PC-9 (cell line): ENCODE measurements at regions of chr5 and their contacts with region 1.

Region 1: GRCh38 chr5:163459922-163460766 is at the starts of genes HMMR and NUDCD2:
- DNase-seq: peak; percentile 91 to 96
- H3K4me3 ChIP-seq: peak within 1 kb of the TSS; percentile 97
- H3K27ac ChIP-seq: peak within 1 kb of the TSS; percentile 95
- H3K4me1 ChIP-seq: peaks cover 36% of the 10 kb centered on the region
- H3K27me3 ChIP-seq: no peaks in the 10 kb centered on the region
- CTCF ChIP-seq: no peak; the same call in 1 of the 2 replicates
- total RNA-seq, gene HMMR: 83.9 and 94.5 TPM in 2 replicates
- total RNA-seq, gene NUDCD2: 68.6 and 71.6 TPM in 2 replicates

Region 2: DNA sequence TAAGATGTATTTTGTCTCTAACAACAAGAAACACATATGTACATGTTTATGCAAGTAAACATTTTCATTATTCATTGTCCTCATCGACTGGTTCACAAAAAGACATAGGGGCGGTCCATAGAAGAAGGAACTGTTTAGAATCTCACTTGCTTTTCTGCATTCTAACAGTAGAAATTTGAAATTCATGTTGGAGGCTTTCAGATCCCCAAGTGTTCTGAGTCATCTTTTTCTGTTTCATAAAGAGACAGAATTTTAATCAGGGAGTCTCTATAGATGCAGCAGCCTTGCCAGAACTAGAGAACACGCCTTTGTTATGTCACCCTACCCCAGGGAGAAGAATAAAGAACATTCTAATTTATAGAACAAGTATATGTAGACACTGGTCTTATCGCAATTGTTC is 1068.3 kb before region 1 on chr5:
- CTCF ChIA-PET with region 1: interaction called, 13 read pairs
- POLR2A ChIA-PET with region 1: no interaction called
- intact Hi-C with region 1: no loop called
- DNase-seq: no peak
- H3K4me3 ChIP-seq: no peak overlapping the region
- H3K27ac ChIP-seq: no peak overlapping the region
- H3K4me1 ChIP-seq: no peaks in the 10 kb centered on the region
- H3K27me3 ChIP-seq: no peaks in the 10 kb centered on the region
- CTCF ChIP-seq: no peak

Region 3: GRCh38 chr5:162929104-162929503 is 531.0 kb before region 1 on chr5:
- CTCF ChIA-PET with region 1: no interaction called
- POLR2A ChIA-PET with region 1: interaction called, 19 read pairs
- intact Hi-C with region 1: no loop called
- DNase-seq: no peak
- H3K4me3 ChIP-seq: no peak overlapping the region
- H3K27ac ChIP-seq: no peak overlapping the region
- H3K4me1 ChIP-seq: no peaks in the 10 kb centered on the region
- H3K27me3 ChIP-seq: no peaks in the 10 kb centered on the region
- CTCF ChIP-seq: no peak

Region 4: GRCh38 chr5:163221581-163221980 is 238.6 kb before region 1 on chr5:
- CTCF ChIA-PET with region 1: no interaction called
- POLR2A ChIA-PET with region 1: no interaction called
- intact Hi-C with region 1: no loop called
- DNase-seq: no peak
- H3K4me3 ChIP-seq: no peak overlapping the region
- H3K27ac ChIP-seq: no peak overlapping the region
- H3K4me1 ChIP-seq: no peaks in the 10 kb centered on the region
- H3K27me3 ChIP-seq: 0 out of 2 replicates have a peak, but pooled peaks cover 4% of the 10 kb centered on the region
- CTCF ChIP-seq: no peak

Region 5: DNA sequence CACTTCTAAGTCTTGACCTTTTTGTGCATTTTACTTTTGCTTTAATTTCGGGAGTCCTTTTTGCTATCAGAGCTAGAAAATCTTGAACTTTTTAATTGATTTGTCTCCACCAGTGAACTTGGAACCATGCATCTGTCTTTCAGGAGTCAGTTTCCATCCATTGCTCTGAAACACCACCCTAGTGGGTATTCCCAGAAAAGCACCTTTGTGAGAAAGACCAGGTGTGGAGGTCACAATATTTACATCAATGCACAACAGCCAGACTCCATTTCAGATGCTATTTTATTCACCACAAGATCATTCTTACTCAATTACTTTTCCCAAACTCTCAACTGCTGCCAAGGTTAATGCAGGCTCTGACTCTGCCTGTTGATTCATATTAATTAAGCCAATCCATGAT is 176.8 kb before region 1 on chr5:
- CTCF ChIA-PET with region 1: no interaction called
- POLR2A ChIA-PET with region 1: no interaction called
- intact Hi-C with region 1: no loop called
- DNase-seq: no peak
- H3K4me3 ChIP-seq: no peak overlapping the region
- H3K27ac ChIP-seq: no peak overlapping the region
- H3K4me1 ChIP-seq: no peaks in the 10 kb centered on the region
- H3K27me3 ChIP-seq: peaks cover under 1% of the 10 kb centered on the region; the same call in 1 of the 2 replicates
- CTCF ChIP-seq: no peak

Region 6: DNA sequence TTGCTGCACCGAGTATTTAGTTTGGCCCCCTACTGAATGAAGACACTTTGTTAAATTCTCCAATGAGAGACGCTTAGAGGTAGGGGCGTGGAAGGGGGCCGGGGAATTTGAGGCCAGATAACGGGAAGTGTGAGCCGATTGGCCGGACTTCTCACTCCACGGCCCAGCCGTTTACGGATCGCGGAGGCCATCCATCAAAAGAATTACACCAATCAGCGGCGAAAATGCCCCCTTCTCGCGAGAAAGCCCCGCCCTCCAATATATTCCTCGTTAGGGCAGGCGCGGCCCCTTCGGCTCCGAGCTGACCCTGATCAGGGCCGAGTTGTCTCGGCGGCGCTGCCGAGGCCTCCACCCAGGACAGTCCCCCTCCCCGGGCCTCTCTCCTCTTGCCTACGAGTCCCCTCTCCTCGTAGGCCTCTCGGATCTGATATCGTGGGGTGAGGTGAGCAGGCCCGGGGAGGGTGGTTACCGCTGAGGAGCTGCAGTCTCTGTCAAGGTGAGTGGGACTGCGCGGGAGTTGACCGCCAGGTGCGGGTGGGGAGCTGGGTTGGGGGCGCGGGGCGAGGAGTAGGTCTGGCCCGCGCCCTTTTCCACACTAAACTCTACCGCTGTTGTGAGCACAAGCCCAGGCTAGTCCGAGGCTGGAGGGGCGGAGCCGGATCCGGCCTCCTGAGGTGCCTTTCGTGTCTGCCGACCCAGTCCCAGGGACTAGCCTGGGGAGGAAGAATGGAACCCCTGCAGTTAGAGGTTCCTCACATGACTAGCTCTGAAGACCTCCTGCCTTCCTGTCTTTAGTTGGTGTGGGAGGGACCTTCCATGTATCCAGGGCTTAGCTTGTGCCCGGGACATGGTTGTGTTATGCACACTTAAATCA is 22.6 kb before region 1 on chr5 and contains the start of gene CCNG1:
- CTCF ChIA-PET with region 1: no interaction called
- POLR2A ChIA-PET with region 1: interaction called, 38 read pairs
- intact Hi-C with region 1: loop called (anchors 2 kb)
- DNase-seq: peak; percentile 91 to 95
- H3K4me3 ChIP-seq: peak within 1 kb of the TSS; percentile 85
- H3K27ac ChIP-seq: peak within 1 kb of the TSS; percentile 56
- H3K4me1 ChIP-seq: peaks cover 28% of the 10 kb centered on the region
- H3K27me3 ChIP-seq: no peaks in the 10 kb centered on the region
- CTCF ChIP-seq: no peak
- total RNA-seq, gene CCNG1: 112 and 170 TPM in 2 replicates

Region 7: DNA sequence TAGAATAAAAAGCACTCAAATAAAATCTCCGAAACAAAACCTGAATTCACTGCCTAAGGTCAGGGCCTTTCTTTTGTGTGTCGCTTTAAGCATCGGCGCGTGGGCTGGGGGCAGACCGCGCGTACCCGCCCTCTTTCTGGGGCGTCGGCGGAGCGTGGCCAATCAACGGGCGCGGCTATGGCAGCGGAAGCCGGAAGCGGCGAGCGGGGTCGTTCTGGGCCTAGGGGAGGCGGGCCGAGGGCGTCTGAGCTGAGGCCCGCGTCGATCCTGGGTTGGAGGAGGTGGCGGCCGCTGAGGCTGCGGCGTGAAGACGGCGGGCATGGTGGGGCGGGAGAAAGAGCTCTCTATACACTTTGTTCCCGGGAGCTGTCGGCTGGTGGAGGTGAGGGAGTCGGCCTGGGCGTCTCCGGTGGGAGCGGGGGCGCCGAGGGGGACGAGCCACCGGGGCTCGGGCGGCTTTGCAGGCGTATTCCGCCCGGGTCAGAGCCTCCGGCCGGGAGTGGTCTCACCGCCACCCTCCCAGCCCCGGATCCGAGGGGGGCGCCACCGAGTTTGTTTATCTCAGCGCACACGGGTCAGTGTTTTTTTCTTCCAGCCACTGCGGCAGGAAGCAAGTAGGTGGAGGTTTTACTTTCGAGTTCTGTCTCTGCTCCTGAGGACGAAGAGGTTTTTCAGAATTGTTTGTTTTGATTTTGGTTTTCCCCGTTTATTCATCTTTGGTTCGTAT is 45.4 kb after region 1 on chr5 and contains the start of gene MAT2B:
- CTCF ChIA-PET with region 1: no interaction called
- POLR2A ChIA-PET with region 1: interaction called, 12 read pairs
- intact Hi-C with region 1: loop called (anchors 1 kb)
- DNase-seq: peak; percentile 87 to 96
- H3K4me3 ChIP-seq: peak within 1 kb of the TSS; percentile 92
- H3K27ac ChIP-seq: peak within 1 kb of the TSS; percentile 72
- H3K4me1 ChIP-seq: peaks cover 29% of the 10 kb centered on the region
- H3K27me3 ChIP-seq: no peaks in the 10 kb centered on the region
- CTCF ChIP-seq: peak; percentile 56; the same call in 1 of the 2 replicates
- total RNA-seq, gene MAT2B: 46.3 and 66.2 TPM in 2 replicates